ENCODE measurements at regions of chr19 and their contacts with region 1.

Region 1: GRCh38 chr19:33406521-33407139 is 33.1 kb downstream of the CEBPG start:
- DNase-seq: peak; percentile 83 to 89
- H3K4me3 ChIP-seq: no peak overlapping the region
- H3K27ac ChIP-seq: no peak overlapping the region
- H3K4me1 ChIP-seq: peaks cover 7 to 40% (median 33%) of the 10 kb centered on the region in 4 donors
- H3K27me3 ChIP-seq: no peaks in the 10 kb centered on the region
- CTCF ChIP-seq: peak in 6 of 7 experiments; percentile 47 to 99 (median 91)
- EP300 ChIP-seq: no peak
- POLR2A ChIP-seq: no peak

Region 2: DNA sequence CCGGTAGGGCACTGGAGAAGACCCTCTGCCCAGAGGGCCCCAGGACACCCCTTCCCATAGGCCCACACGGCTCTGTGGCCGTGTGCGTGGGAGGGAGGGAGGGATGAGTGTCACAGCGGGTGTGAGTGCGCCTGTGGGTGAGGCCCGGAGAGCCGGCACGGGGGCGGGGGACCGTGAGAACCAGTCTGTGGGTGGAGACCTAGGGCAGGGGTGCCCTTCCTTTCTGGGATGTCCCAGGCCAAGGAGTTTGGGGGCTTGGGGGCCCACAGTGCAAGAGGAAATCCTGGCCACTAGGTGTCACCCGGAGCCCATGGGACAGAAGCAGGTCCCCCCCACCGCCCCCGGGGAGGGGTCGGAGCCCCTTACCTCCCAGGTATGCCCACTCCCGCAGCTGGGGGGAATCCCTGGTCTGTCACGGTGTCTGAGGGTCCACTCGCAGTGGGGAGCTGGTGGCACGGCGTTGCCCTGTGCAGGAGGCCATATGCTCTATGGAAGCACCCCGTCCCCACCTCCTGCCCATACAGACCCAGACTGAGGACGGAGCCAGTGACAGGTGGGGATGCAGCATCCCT is 165.0 kb before region 1 on chr19:
- intact Hi-C with region 1: loop called (anchors 2 kb)
- DNase-seq: peak; percentile 31 to 60
- H3K4me3 ChIP-seq: no peak overlapping the region
- H3K27ac ChIP-seq: no peak overlapping the region
- H3K4me1 ChIP-seq: peaks cover 8 to 11% (median 10%) of the 10 kb centered on the region in 4 donors
- H3K27me3 ChIP-seq: peaks cover 0 to 14% (median 0%) of the 10 kb centered on the region in 3 donors
- CTCF ChIP-seq: peak in 5 of 7 experiments; percentile 52 to 88 (median 80)
- EP300 ChIP-seq: no peak
- POLR2A ChIP-seq: no peak

Region 3: DNA sequence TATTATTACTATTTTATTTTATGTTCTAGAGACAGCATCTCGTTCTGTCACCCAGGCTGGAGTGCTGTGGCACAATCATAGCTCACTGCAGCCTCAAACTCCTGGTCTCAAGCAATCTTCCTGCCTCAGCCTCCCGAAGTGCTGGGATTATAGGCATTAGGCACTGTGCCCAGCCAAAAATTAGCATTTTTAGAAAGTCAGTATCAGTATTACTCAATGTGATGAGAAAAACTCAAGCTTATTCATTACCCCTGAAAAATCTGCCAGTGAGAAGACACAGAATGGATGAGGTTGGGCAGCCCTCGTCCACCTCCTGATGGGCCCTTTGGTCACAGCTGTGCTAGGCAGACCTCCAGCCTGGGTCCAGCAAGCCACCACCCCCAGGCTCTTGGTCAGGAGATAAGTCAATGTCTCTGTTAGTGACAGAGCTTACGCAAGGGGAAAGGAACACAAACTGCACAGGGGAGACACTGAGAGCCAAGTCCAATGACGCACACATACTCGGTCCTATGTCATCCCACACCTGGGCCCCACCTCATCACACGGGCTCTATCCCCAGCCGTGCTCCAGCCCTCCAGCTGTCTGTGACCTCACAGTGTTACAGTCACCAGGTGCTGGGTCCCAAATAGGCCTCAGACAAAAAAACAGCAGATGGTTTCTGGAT is 95.2 kb after region 1 on chr19:
- intact Hi-C with region 1: no loop called
- DNase-seq: no peak
- H3K4me3 ChIP-seq: no peak overlapping the region
- H3K27ac ChIP-seq: no peak overlapping the region
- H3K4me1 ChIP-seq: no peaks in the 10 kb centered on the region
- H3K27me3 ChIP-seq: no peaks in the 10 kb centered on the region
- CTCF ChIP-seq: no peak
- EP300 ChIP-seq: no peak
- POLR2A ChIP-seq: no peak

Region 4: GRCh38 chr19:33512580-33513137 is 106.0 kb after region 1 on chr19:
- intact Hi-C with region 1: no loop called
- DNase-seq: no peak
- H3K4me3 ChIP-seq: no peak overlapping the region
- H3K27ac ChIP-seq: no peak overlapping the region
- H3K4me1 ChIP-seq: peaks cover 0 to 28% (median 15%) of the 10 kb centered on the region in 4 donors
- H3K27me3 ChIP-seq: no peaks in the 10 kb centered on the region
- CTCF ChIP-seq: no peak
- EP300 ChIP-seq: no peak
- POLR2A ChIP-seq: no peak